GM12878 (cell line): ENCODE measurements at regions of chr6 and their contacts with region 1.

Region 1: DNA sequence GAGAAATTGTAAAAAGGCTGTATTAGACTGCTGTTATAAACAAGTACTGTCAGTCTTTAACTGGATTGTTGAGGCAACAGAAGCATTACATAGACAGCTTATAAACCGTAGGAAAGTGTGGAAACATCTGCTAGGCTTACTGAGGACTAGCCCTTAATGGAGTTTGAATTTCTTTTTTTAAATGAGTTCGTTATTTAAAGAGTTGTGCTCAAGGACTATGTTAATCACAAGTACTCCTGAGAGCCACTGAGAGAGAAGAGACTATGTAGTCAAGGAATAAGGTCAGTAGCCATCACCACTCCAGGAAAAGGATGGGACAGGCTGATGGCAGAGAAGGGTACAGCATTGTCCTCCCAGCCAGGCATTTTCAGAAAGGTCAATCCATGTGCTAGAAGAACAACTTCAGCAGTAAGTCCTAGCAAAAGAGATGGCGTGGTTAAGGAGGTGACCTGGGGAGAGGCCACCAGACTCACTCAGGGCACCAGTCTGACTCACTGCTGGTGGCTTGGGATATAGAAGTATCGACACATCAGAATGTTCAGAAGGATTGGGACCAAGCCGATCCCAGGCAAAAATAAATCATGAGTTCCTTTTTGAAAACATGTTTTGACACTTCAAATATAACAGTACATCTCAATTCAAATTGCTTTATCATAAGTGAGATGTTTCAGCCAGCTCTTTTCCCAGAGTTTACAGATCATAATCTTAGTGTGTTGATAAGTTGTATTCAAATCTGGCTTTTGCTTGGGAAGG is 6.4 kb downstream of the RPS12 start:
- DNase-seq: no peak
- ATAC-seq: peak; percentile 26
- H3K4me3 ChIP-seq: no peak overlapping the region
- H3K27ac ChIP-seq: no peak overlapping the region
- H3K4me1 ChIP-seq: no peaks in the 10 kb centered on the region
- H3K27me3 ChIP-seq: no peaks in the 10 kb centered on the region
- CTCF ChIP-seq: no peak
- EP300 ChIP-seq: no peak
- POLR2A ChIP-seq: peak; percentile 65
- RAD21 ChIP-seq: no peak

Region 2: DNA sequence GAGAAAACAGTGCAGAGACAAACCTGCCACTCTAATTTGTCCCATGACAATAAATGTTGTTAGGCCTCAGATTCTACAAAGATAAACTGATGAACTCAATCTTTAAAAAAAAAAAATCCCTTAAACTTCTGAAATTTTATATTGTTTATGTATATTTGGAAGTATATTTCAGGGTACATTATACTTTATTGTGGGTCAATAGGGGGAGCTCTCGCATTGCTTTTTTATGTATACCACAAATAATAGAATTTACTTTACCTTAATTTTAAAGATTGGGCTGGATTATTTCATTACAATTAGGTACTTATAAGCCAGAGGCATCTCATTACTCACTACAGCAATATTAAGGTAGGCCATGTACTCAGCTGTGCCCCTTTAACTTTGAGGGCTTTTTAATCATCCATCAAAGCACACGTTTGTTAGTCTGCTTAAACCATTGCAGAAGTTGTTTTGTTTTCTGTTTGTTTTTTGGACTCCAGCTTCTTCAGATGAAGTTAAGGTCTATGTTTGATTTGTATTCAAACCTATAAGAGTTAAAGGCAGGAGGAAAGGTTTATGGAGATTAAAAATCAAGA is 364.1 kb after region 1 on chr6:
- CTCF ChIA-PET with region 1: no interaction called
- POLR2A ChIA-PET with region 1: no interaction called
- RAD21 ChIA-PET with region 1: no interaction called
- SMC1A ChIA-PET with region 1: no interaction called
- in situ Hi-C with region 1: no loop called
- intact Hi-C with region 1: loop called (anchors 10 kb)
- DNase-seq: no peak
- ATAC-seq: no peak
- H3K4me3 ChIP-seq: no peak overlapping the region
- H3K27ac ChIP-seq: no peak overlapping the region
- H3K4me1 ChIP-seq: no peaks in the 10 kb centered on the region
- H3K27me3 ChIP-seq: no peaks in the 10 kb centered on the region; a peak in 1 of 4 replicates
- CTCF ChIP-seq: peak; percentile 31 to 47 (median 43); a peak in 3 of 6 replicates
- EP300 ChIP-seq: no peak
- POLR2A ChIP-seq: no peak
- RAD21 ChIP-seq: peak; percentile 27; the same call in 1 of the 2 replicates